Naive thymus-derived CD4-positive, alpha-beta T cell (primary cell): ENCODE measurements at regions of chr1 and their contacts with region 1.

Region 1: GRCh38 chr1:44213222-44214112 is at the start of gene DMAP1:
- DNase-seq: peak; percentile 75 to 89 (median 83)
- ATAC-seq: peak; percentile 93
- H3K4me3 ChIP-seq: peak within 1 kb of the TSS; percentile 93
- H3K4me3 Mint-ChIP-seq: peak within 1 kb of the TSS; percentile 85 to 97 (median 94)
- H3K27ac ChIP-seq: peak within 1 kb of the TSS; percentile 78
- H3K27ac Mint-ChIP-seq: peak within 1 kb of the TSS; percentile 86 to 97 (median 95)
- H3K4me1 ChIP-seq: peaks cover 9 to 17% of the 10 kb centered on the region in 2 donors
- H3K4me1 Mint-ChIP-seq: peaks cover 18 to 61% (median 49%) of the 10 kb centered on the region in 7 donors
- H3K27me3 ChIP-seq: no peaks in the 10 kb centered on the region
- H3K27me3 Mint-ChIP-seq: peaks cover 0 to 4% (median 0%) of the 10 kb centered on the region in 5 donors
- total RNA-seq, gene DMAP1: 46.3 to 96.2 (median 66.7) TPM

Region 2: GRCh38 chr1:43367904-43368645 is 845.4 kb before region 1 on chr1 and contains the start of gene ELOVL1:
- CTCF ChIA-PET with region 1: no interaction called
- POLR2A ChIA-PET with region 1: no interaction called
- intact Hi-C with region 1: loop called in 1 of 2 experiments (anchors 5 kb)
- DNase-seq: peak; percentile 40 to 94 (median 58)
- ATAC-seq: peak; percentile 91
- H3K4me3 ChIP-seq: peak within 1 kb of the TSS; percentile 89
- H3K4me3 Mint-ChIP-seq: peak within 1 kb of the TSS; percentile 86 to 97 (median 92)
- H3K27ac ChIP-seq: peak within 1 kb of the TSS; percentile 90
- H3K27ac Mint-ChIP-seq: peak within 1 kb of the TSS; percentile 88 to 95 (median 91)
- H3K4me1 ChIP-seq: peaks cover 13 to 22% of the 10 kb centered on the region in 2 donors
- H3K4me1 Mint-ChIP-seq: peaks cover 24 to 47% (median 42%) of the 10 kb centered on the region in 7 donors
- H3K27me3 ChIP-seq: no peaks in the 10 kb centered on the region
- H3K27me3 Mint-ChIP-seq: no peaks in the 10 kb centered on the region
- total RNA-seq, gene ELOVL1: 25.9 to 65.3 (median 32.3) TPM

Region 3: GRCh38 chr1:43783671-43784205 is 429.7 kb before region 1 on chr1:
- CTCF ChIA-PET with region 1: no interaction called
- POLR2A ChIA-PET with region 1: no interaction called
- intact Hi-C with region 1: no loop called
- DNase-seq: no peak
- ATAC-seq: peak; percentile 24
- H3K4me3 ChIP-seq: no peak overlapping the region
- H3K4me3 Mint-ChIP-seq: no peak overlapping the region
- H3K27ac ChIP-seq: no peak overlapping the region
- H3K27ac Mint-ChIP-seq: peak overlapping the region in 1 of 9 donors; percentile 37
- H3K4me1 ChIP-seq: no peaks in the 10 kb centered on the region
- H3K4me1 Mint-ChIP-seq: peaks cover 0 to 26% (median 4%) of the 10 kb centered on the region in 7 donors
- H3K27me3 ChIP-seq: no peaks in the 10 kb centered on the region
- H3K27me3 Mint-ChIP-seq: no peaks in the 10 kb centered on the region

Region 4: GRCh38 chr1:44318097-44319088 is 104.9 kb after region 1 on chr1:
- CTCF ChIA-PET with region 1: interaction called, 11 read pairs
- POLR2A ChIA-PET with region 1: no interaction called
- intact Hi-C with region 1: loop called (anchors 1 kb)
- DNase-seq: peak; percentile 14 to 61 (median 48)
- ATAC-seq: peak; percentile 75
- H3K4me3 ChIP-seq: no peak overlapping the region
- H3K4me3 Mint-ChIP-seq: no peak overlapping the region
- H3K27ac ChIP-seq: no peak overlapping the region
- H3K27ac Mint-ChIP-seq: peak overlapping the region in 3 of 9 donors; percentile 18 to 33 (median 28)
- H3K4me1 ChIP-seq: no peaks in the 10 kb centered on the region
- H3K4me1 Mint-ChIP-seq: peaks cover 0 to 30% (median 4%) of the 10 kb centered on the region in 7 donors
- H3K27me3 ChIP-seq: no peaks in the 10 kb centered on the region
- H3K27me3 Mint-ChIP-seq: no peaks in the 10 kb centered on the region

Region 5: GRCh38 chr1:44594871-44595746 is 381.6 kb after region 1 on chr1:
- CTCF ChIA-PET with region 1: no interaction called
- POLR2A ChIA-PET with region 1: no interaction called
- intact Hi-C with region 1: loop called (anchors 1 kb)
- DNase-seq: peak; percentile 27 to 82 (median 62)
- ATAC-seq: peak; percentile 92
- H3K4me3 ChIP-seq: no peak overlapping the region
- H3K4me3 Mint-ChIP-seq: no peak overlapping the region
- H3K27ac ChIP-seq: no peak overlapping the region
- H3K27ac Mint-ChIP-seq: no peak overlapping the region
- H3K4me1 ChIP-seq: no peaks in the 10 kb centered on the region
- H3K4me1 Mint-ChIP-seq: peaks cover 0 to 4% (median 0%) of the 10 kb centered on the region in 7 donors
- H3K27me3 ChIP-seq: no peaks in the 10 kb centered on the region
- H3K27me3 Mint-ChIP-seq: peaks cover 0 to 4% (median 2%) of the 10 kb centered on the region in 5 donors

Region 6: GRCh38 chr1:44674113-44675000 is 460.9 kb after region 1 on chr1 and contains the starts of genes ARMH1 and TMEM53:
- CTCF ChIA-PET with region 1: no interaction called
- POLR2A ChIA-PET with region 1: interaction called, 4 read pairs
- intact Hi-C with region 1: loop called in 1 of 2 experiments (anchors 1 kb)
- DNase-seq: peak; percentile 91 to 96 (median 95)
- ATAC-seq: peak; percentile 94
- H3K4me3 ChIP-seq: peak within 1 kb of the TSS; percentile 81
- H3K4me3 Mint-ChIP-seq: peak within 1 kb of the TSS; percentile 83 to 94 (median 91)
- H3K27ac ChIP-seq: peak within 1 kb of the TSS; percentile 76
- H3K27ac Mint-ChIP-seq: peak within 1 kb of the TSS; percentile 84 to 94 (median 91)
- H3K4me1 ChIP-seq: peaks cover 0 to 6% of the 10 kb centered on the region in 2 donors
- H3K4me1 Mint-ChIP-seq: peaks cover 13 to 34% (median 23%) of the 10 kb centered on the region in 7 donors
- H3K27me3 ChIP-seq: no peaks in the 10 kb centered on the region
- H3K27me3 Mint-ChIP-seq: no peaks in the 10 kb centered on the region
- total RNA-seq, gene ARMH1: 65.8 to 205 (median 87.0) TPM
- total RNA-seq, gene TMEM53: 1.6 to 3.5 (median 1.9) TPM